H1 (cell line): ENCODE measurements at regions of chr11 and their contacts with region 1.

Region 1: GRCh38 chr11:34926101-34926830 is 9.8 kb downstream of the PDHX start:
- DNase-seq: no peak
- H3K4me3 ChIP-seq: no peak overlapping the region
- H3K27ac ChIP-seq: no peak overlapping the region
- H3K4me1 ChIP-seq: peaks cover 0 to 5% (median 1%) of the 10 kb centered on the region in 4 experiments; a peak in 3 of 7 replicates
- H3K27me3 ChIP-seq: no peaks in the 10 kb centered on the region
- CTCF ChIP-seq: peak in 2 of 3 experiments; percentile 45 to 50; a peak in 2 of 4 replicates
- EP300 ChIP-seq: no peak
- POLR2A ChIP-seq: no peak
- RAD21 ChIP-seq: peak; percentile 82 to 85

Region 2: DNA sequence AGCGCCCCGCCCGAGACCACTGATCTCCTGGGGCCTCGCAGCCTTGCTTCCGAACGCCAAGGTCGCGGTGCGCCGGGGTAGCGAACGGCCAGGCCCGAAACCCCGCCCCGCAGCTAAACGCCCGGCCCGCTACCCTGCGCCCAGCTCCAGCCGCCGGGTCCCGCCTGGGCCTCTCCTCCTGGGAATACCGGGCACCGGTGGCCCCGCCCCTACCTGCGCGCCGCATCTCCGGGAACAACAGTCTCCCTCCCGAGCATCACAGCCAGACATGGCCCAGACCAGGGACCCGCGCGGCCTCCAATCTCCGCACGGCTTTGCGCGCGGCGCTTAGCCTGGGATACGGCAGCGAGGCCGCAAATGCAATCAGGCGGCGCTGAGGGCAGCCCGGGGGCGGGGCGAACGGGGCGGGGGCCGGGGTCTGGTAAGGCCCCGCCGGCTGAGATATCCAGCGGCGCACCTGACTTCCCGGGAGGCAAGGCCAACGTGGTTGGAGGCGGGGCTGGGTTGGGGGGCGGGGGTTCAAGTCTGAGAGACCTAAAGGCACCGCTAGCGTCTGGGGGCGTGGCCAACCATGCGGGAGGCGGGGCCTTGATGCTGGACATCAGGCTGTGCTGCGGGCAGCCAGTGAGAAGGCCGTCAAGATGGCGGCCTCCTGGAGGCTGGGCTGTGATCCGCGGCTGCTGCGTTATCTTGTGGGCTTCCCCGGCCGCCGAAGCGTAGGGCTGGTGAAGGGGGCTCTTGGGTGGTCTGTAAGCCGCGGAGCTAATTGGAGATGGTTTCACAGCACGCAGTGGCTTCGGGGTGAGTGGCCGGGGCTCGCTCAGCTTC is 10.0 kb before region 1 on chr11 and contains the starts of genes APIP and PDHX:
- CTCF ChIA-PET with region 1: interaction called, 3 read pairs
- POLR2A ChIA-PET with region 1: interaction called, 23 read pairs
- DNase-seq: peak; percentile 98 to 99
- H3K4me3 ChIP-seq: peak within 1 kb of the TSS; percentile 88 to 98 (median 94)
- H3K27ac ChIP-seq: peak within 1 kb of the TSS; percentile 95
- H3K4me1 ChIP-seq: peaks cover 0 to 4% (median 1%) of the 10 kb centered on the region in 4 experiments; a peak in 2 of 7 replicates
- H3K27me3 ChIP-seq: no peaks in the 10 kb centered on the region
- CTCF ChIP-seq: no peak
- EP300 ChIP-seq: no peak
- POLR2A ChIP-seq: peak; percentile 93 to 98
- RAD21 ChIP-seq: no peak
- total RNA-seq, gene APIP: 25.7 and 25.9 TPM in 2 replicates
- total RNA-seq, gene PDHX: 47.1 and 51.9 TPM in 2 replicates

Region 3: GRCh38 chr11:34940026-34940677 is 13.9 kb after region 1 on chr11:
- CTCF ChIA-PET with region 1: interaction called, 17 read pairs
- POLR2A ChIA-PET with region 1: interaction called, 4 read pairs
- DNase-seq: no peak
- H3K4me3 ChIP-seq: no peak overlapping the region
- H3K27ac ChIP-seq: no peak overlapping the region
- H3K4me1 ChIP-seq: no peaks in the 10 kb centered on the region
- H3K27me3 ChIP-seq: no peaks in the 10 kb centered on the region
- CTCF ChIP-seq: no peak
- EP300 ChIP-seq: no peak
- POLR2A ChIP-seq: no peak
- RAD21 ChIP-seq: no peak

Region 4: DNA sequence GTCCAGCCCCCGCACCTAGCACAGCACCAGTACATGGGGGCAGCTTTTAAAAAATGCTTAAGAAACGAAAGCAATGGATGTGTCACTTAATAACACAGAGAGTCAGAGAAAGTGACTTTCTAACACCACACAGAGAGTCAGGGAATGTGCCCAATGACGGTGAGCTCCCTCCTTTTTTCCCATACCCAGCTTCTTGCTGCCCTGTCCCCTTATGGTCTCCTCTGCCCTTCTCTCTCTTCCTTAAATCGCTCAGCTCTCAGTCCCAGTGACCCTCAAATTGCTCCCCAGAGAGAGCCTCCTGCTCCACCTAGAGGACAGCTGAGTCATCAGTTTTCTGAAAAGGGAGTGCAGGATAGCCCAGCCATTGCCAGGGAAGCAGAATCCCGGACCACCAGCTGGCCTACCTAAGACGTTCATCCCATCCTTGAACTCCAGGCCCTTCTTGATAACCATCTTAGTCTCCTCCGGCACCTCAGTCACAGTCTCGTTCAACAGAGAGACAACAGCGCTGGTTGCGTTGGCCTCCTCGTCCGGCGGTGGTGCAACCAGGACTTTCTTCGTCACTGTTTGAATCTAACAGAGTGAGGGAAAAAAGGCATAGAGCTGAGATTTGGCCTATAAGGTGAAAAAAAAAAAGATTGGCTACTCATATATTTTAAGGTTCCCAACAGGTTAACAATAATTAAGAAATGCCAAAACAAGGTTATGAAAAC is 379.6 kb after region 1 on chr11:
- CTCF ChIA-PET with region 1: interaction called, 12 read pairs
- POLR2A ChIA-PET with region 1: no interaction called
- DNase-seq: peak; percentile 21 to 53
- H3K4me3 ChIP-seq: no peak overlapping the region
- H3K27ac ChIP-seq: no peak overlapping the region
- H3K4me1 ChIP-seq: peaks cover 0 to 2% (median 0%) of the 10 kb centered on the region in 4 experiments; a peak in 1 of 7 replicates
- H3K27me3 ChIP-seq: no peaks in the 10 kb centered on the region
- CTCF ChIP-seq: peak; percentile 48 to 81 (median 68)
- EP300 ChIP-seq: no peak
- POLR2A ChIP-seq: no peak
- RAD21 ChIP-seq: peak; percentile 79 to 84

Region 5: GRCh38 chr11:35391922-35392813 is 465.9 kb after region 1 on chr11:
- CTCF ChIA-PET with region 1: interaction called, 31 read pairs
- POLR2A ChIA-PET with region 1: no interaction called
- DNase-seq: peak; percentile 66 to 98
- H3K4me3 ChIP-seq: no peak overlapping the region
- H3K27ac ChIP-seq: no peak overlapping the region
- H3K4me1 ChIP-seq: no peaks in the 10 kb centered on the region
- H3K27me3 ChIP-seq: no peaks in the 10 kb centered on the region; a peak in 2 of 7 replicates
- CTCF ChIP-seq: peak; percentile 80 to 91 (median 91)
- EP300 ChIP-seq: no peak
- POLR2A ChIP-seq: no peak
- RAD21 ChIP-seq: peak; percentile 99 to 100